ENCODE measurements at regions of chr14 and their contacts with region 1.

Region 1: GRCh38 chr14:54566410-54567223 is at the start of gene SAMD4A:
- DNase-seq: peak; percentile 86
- ATAC-seq: peak; percentile 39
- H3K4me3 ChIP-seq: peak within 1 kb of the TSS; percentile 94
- H3K27ac ChIP-seq: peak within 1 kb of the TSS; percentile 97
- H3K4me1 ChIP-seq: peaks cover 11% of the 10 kb centered on the region
- H3K27me3 ChIP-seq: no peaks in the 10 kb centered on the region
- CTCF ChIP-seq: peak; percentile 25; the same call in 1 of the 2 replicates
- POLR2A ChIP-seq: peak; percentile 28; the same call in 1 of the 2 replicates
- RAD21 ChIP-seq: 0 out of 2 replicates have a peak, but pooled peaks have one; percentile 22
- total RNA-seq, gene SAMD4A: 36.7 and 38.2 TPM in 2 replicates

Region 2: GRCh38 chr14:54356172-54356571 is 210.4 kb before region 1 on chr14:
- CTCF ChIA-PET with region 1: no interaction called
- POLR2A ChIA-PET with region 1: interaction called, 10 read pairs
- dilution Hi-C with region 1: no loop called
- in situ Hi-C with region 1: no loop called
- intact Hi-C with region 1: no loop called
- DNase-seq: peak; percentile 64
- ATAC-seq: no peak; the same call in none of the 2 replicates
- H3K4me3 ChIP-seq: no peak overlapping the region
- H3K27ac ChIP-seq: no peak overlapping the region
- H3K4me1 ChIP-seq: no peaks in the 10 kb centered on the region
- H3K27me3 ChIP-seq: peaks cover 5% of the 10 kb centered on the region
- CTCF ChIP-seq: no peak
- POLR2A ChIP-seq: no peak
- RAD21 ChIP-seq: no peak

Region 3: GRCh38 chr14:54627540-54628363 is 61.1 kb after region 1 on chr14:
- CTCF ChIA-PET with region 1: interaction called, 9 read pairs
- POLR2A ChIA-PET with region 1: interaction called, 4 read pairs
- dilution Hi-C with region 1: no loop called
- in situ Hi-C with region 1: no loop called
- intact Hi-C with region 1: loop called (anchors 5 kb)
- DNase-seq: peak; percentile 69
- ATAC-seq: peak; percentile 51
- H3K4me3 ChIP-seq: no peak overlapping the region
- H3K27ac ChIP-seq: peak overlapping the region; percentile 97
- H3K4me1 ChIP-seq: peaks cover 26% of the 10 kb centered on the region
- H3K27me3 ChIP-seq: no peaks in the 10 kb centered on the region
- CTCF ChIP-seq: no peak
- POLR2A ChIP-seq: no peak
- RAD21 ChIP-seq: no peak

Region 4: GRCh38 chr14:54683882-54684794 is 117.5 kb after region 1 on chr14:
- CTCF ChIA-PET with region 1: interaction called, 3 read pairs
- POLR2A ChIA-PET with region 1: no interaction called
- dilution Hi-C with region 1: no loop called
- in situ Hi-C with region 1: loop called (anchors 5 kb)
- intact Hi-C with region 1: loop called (anchors 1 kb)
- DNase-seq: peak; percentile 80
- ATAC-seq: peak; percentile 57
- H3K4me3 ChIP-seq: no peak overlapping the region
- H3K27ac ChIP-seq: peak overlapping the region; percentile 96
- H3K4me1 ChIP-seq: peaks cover 47% of the 10 kb centered on the region
- H3K27me3 ChIP-seq: no peaks in the 10 kb centered on the region
- CTCF ChIP-seq: no peak
- POLR2A ChIP-seq: no peak
- RAD21 ChIP-seq: no peak

Region 5: DNA sequence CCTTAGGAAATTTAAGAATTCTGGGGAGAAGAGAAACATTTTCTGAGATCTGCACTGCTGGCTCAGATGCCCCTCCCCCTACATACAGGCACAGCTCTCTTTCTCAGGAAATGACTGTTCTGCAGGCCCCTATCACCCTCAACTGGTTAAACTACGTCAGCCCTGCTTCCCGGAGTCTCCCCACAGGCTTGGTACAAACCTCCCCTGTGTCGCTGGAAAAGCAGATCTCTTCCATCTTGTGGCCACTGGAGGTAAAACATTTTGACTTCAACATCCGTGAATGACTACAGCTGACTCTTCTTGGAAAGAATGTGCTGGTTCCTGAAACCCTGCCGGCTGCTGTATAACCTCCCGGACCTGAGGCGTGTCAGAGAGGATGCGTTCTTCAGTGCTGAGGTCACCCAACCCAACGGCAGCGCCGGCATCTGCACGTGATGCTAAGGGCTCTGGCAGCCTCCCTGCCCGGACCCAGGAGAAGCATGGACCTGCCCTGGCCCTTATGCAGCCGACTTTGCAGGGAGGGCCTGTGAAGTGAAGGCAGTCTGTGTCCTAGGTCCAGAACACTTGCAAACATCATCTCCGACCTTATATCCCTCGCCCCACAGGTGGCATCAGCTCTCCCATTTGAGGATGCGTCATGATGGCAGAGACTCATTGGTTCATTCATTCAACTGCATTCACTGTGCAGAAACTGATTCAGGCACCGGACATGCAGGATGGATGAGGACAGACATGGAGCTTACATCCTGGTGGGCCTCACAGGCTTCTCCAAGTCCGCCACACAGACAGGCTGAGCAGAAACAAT is 206.8 kb after region 1 on chr14:
- CTCF ChIA-PET with region 1: interaction called, 17 read pairs
- POLR2A ChIA-PET with region 1: interaction called, 9 read pairs
- dilution Hi-C with region 1: no loop called
- in situ Hi-C with region 1: loop called (anchors 5 kb)
- intact Hi-C with region 1: loop called (anchors 1 kb)
- DNase-seq: peak; percentile 100
- ATAC-seq: peak; percentile 88
- H3K4me3 ChIP-seq: no peak overlapping the region
- H3K27ac ChIP-seq: peak overlapping the region; percentile 85
- H3K4me1 ChIP-seq: peaks cover 32% of the 10 kb centered on the region
- H3K27me3 ChIP-seq: no peaks in the 10 kb centered on the region
- CTCF ChIP-seq: peak; percentile 92
- POLR2A ChIP-seq: peak; percentile 63
- RAD21 ChIP-seq: peak; percentile 87

Region 6: GRCh38 chr14:54893151-54893760 is 326.6 kb after region 1 on chr14:
- CTCF ChIA-PET with region 1: no interaction called
- POLR2A ChIA-PET with region 1: no interaction called
- dilution Hi-C with region 1: no loop called
- in situ Hi-C with region 1: no loop called
- intact Hi-C with region 1: loop called (anchors 1 kb)
- DNase-seq: peak; percentile 80
- ATAC-seq: peak; percentile 73
- H3K4me3 ChIP-seq: no peak overlapping the region
- H3K27ac ChIP-seq: no peak overlapping the region
- H3K4me1 ChIP-seq: no peaks in the 10 kb centered on the region
- H3K27me3 ChIP-seq: no peaks in the 10 kb centered on the region
- CTCF ChIP-seq: peak; percentile 71
- POLR2A ChIP-seq: no peak
- RAD21 ChIP-seq: peak; percentile 50; the same call in 1 of the 2 replicates

Measured in IMR-90 (cell line).